ENCODE measurements at regions of chr14 and their contacts with region 1.

Region 1: DNA sequence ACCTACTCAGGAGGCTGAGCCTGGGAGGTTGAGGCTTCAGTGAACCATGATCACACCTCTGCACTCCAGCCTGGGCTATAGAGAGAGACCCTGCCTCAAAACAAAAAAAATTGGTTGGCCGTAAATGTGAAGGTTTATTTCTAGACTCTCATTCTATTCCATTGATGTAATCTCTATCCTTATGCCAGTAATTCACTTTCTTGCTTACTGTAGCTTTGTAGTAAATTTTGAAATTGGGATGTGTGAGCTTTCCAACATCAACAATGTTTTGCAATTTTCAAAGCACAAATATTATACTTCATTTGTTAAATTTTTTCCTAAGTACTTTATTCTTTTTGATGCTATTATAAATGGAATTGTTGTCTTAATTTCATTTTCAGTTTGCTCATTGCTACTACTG is 24.6 kb downstream of the LIN52 start:
- DNase-seq: no peak
- ATAC-seq: no peak
- H3K4me3 ChIP-seq: no peak overlapping the region
- H3K4me1 ChIP-seq: no peaks in the 10 kb centered on the region
- CTCF ChIP-seq: no peak

Region 2: DNA sequence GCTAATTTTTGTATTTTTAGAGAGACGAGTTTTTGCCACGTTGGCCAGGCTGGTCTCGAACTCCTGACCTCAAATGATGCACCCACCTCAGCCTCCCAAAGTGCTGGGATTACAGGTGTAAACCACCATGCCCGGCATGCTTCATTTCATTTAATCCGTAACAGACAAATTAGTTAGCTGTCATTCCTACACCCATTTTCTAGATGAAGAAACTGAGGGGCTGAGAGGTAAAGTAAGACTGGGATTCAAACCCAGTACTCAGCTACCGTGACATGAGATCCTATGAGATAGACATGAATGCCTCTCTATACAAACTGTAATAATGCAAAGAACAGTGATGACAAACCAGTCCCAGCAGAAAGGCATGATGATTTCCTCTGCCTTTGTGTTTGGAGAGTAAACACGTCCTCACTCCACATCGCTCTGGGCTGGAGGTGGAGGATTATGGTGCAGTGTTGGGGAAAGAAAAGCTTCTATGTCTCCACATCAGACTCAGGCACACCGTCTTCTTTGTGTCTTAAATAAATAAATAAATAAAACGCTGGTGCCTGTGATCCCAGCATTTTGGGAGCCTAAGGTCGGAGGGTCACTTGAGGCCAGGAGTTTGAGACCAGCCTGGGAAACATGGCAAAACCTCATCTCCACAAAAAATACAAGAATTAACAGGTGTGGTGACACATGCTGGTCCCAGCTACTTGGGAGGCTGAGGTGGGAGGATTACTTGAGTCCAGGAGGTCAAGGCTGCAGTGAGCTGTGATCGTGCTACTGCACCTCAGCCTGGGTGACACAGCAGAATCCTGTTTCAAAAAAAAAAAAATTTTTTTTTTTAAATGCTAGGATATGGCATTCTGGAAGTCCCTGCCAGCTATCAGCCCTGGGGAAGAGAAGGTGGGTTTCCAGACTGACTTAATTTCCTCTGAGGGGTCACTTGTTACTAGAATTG is 140.3 kb after region 1 on chr14:
- intact Hi-C with region 1: loop called in 1 of 2 experiments (anchors 5 kb)
- DNase-seq: no peak
- ATAC-seq: no peak
- H3K4me3 ChIP-seq: no peak overlapping the region
- H3K4me1 ChIP-seq: no peaks in the 10 kb centered on the region
- CTCF ChIP-seq: no peak

Region 3: GRCh38 chr14:74257078-74257989 is 148.0 kb after region 1 on chr14:
- intact Hi-C with region 1: loop called (anchors 5 kb)
- DNase-seq: peak in 2 of 3 donors; percentile 43 to 60
- ATAC-seq: peak; percentile 98
- H3K4me3 ChIP-seq: no peak overlapping the region
- H3K4me1 ChIP-seq: peaks cover 4% of the 10 kb centered on the region
- CTCF ChIP-seq: peak; percentile 94

Region 4: GRCh38 chr14:74655599-74656389 is 546.4 kb after region 1 on chr14:
- intact Hi-C with region 1: no loop called
- DNase-seq: no peak
- ATAC-seq: no peak
- H3K4me3 ChIP-seq: no peak overlapping the region
- H3K4me1 ChIP-seq: no peaks in the 10 kb centered on the region
- CTCF ChIP-seq: no peak

Measured in mucosa of descending colon (tissue), 3 donors.